AG04450 (cell line): ENCODE measurements at regions of chr22 and their contacts with region 1.

Region 1: DNA sequence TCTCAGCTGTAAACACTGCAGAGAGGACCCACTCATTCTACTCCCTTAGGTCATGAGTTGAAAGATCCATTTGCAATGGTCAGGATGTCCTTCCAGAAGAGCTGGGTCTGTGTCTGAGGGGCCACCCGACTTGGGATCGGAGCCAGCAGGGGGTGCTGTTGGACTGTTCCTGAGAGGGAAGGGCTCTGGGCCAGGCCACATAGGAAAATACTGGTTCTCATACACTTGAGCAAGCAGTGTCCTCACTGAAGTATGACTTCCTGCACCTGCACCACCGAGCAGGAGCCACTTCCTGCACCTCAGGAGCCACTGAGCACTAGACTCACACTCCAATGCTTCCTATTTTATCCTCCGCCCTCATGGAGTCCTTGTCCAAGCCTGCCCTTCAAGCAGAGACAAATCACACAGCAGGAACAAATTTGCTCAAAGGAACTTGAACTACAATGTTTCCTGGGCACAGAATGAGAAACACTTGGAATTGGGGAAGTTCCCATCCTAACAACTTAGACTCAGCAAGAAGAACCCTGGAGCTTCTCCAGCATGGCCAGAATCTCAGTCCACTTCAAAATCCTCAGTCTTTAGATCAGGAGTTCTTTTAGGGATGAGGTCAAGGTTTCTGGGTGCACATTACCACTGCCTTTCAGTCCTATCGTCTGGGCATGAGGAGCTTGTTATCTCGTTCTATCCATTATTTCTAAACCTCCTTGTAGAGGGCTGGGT is 36.6 kb upstream of the VPREB1 start:
- DNase-seq: peak; percentile 39
- H3K4me3 ChIP-seq: no peak overlapping the region
- H3K27ac ChIP-seq: no peak overlapping the region
- H3K27me3 ChIP-seq: peaks cover 10% of the 10 kb centered on the region
- CTCF ChIP-seq: peak; percentile 83

Region 2: GRCh38 chr22:22219140-22219996 is 11.4 kb after region 1 on chr22:
- CTCF ChIA-PET with region 1: no interaction called
- POLR2A ChIA-PET with region 1: no interaction called
- DNase-seq: no peak
- H3K4me3 ChIP-seq: no peak overlapping the region
- H3K27ac ChIP-seq: no peak overlapping the region
- H3K27me3 ChIP-seq: peaks cover 9% of the 10 kb centered on the region
- CTCF ChIP-seq: no peak

Region 3: DNA sequence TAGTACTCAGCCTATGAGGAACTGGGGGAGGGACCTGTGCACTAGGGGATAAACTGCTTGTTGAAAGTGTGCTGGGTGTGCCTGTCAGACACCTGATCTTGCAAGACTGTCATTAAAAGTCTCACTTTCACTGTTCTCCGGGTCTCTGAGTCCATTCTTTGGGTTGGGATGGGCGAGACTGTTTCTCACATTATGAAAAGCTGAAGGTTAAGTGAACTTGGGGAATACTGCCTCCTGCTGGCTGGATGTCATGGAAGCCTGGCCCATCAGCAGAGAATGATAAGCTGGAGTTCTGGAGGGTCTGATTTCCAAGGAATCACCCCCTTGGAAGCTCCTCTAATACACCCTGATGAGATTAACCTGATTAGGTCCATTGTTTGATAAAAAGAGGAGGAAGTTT is 27.6 kb after region 1 on chr22:
- CTCF ChIA-PET with region 1: interaction called, 21 read pairs
- POLR2A ChIA-PET with region 1: no interaction called
- DNase-seq: no peak
- H3K4me3 ChIP-seq: no peak overlapping the region
- H3K27ac ChIP-seq: no peak overlapping the region
- H3K27me3 ChIP-seq: peaks cover 5% of the 10 kb centered on the region
- CTCF ChIP-seq: peak; percentile 41

Region 4: GRCh38 chr22:22343581-22344296 is 135.7 kb after region 1 on chr22:
- CTCF ChIA-PET with region 1: interaction called, 12 read pairs
- POLR2A ChIA-PET with region 1: no interaction called
- DNase-seq: no peak
- H3K4me3 ChIP-seq: no peak overlapping the region
- H3K27ac ChIP-seq: no peak overlapping the region
- H3K27me3 ChIP-seq: peaks cover 8% of the 10 kb centered on the region
- CTCF ChIP-seq: no peak